ENCODE measurements at regions of chr1 and their contacts with region 1.

Region 1: GRCh38 chr1:181366910-181367309 is 116.4 kb upstream of the CACNA1E start:
- DNase-seq: peak in 1 of 2 donors; percentile 58
- H3K4me3 ChIP-seq: no peak overlapping the region
- CTCF ChIP-seq: no peak
- POLR2A ChIP-seq: no peak

Region 2: DNA sequence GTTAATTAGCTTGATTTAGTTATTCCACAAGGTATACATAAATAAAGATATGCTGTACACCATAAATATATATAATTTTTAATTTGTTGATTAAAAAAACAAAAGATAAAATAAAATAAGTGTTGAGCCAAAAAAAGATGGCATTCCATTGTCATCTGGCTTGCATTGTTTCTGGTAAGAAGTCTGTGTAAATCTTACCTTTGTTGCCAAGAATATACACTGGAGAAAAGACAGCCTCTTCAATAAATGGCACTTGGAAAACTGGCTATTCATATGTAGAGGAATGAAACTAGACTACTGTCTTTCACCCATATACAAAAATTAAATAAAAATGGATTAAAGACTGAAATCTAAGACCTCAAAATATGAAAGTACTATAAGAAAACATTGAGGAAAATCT is 81.9 kb before region 1 on chr1:
- intact Hi-C with region 1: no loop called
- DNase-seq: no peak
- H3K4me3 ChIP-seq: no peak overlapping the region
- CTCF ChIP-seq: no peak
- POLR2A ChIP-seq: no peak

Region 3: DNA sequence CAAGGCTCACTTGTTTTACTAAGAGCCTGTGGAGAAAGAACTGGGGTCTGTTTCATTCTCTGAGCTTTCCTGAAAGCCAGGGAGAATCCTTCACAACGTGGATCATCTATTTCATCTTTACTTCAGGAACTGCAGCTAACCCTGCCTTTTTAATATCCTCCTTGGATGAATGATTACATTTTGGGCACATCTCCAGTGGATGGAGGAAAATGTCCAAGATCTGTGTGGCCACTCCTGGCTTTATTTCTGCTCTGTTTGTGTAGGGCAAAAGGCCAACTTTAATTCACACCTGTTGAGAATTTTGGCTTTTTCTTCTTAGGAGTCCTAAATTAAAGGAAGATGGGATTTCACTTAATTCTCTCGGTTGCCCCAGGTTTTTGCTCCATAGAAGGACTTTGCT is 46.9 kb after region 1 on chr1:
- intact Hi-C with region 1: loop called (anchors 2 kb)
- DNase-seq: no peak
- H3K4me3 ChIP-seq: no peak overlapping the region
- CTCF ChIP-seq: no peak
- POLR2A ChIP-seq: no peak

Region 4: DNA sequence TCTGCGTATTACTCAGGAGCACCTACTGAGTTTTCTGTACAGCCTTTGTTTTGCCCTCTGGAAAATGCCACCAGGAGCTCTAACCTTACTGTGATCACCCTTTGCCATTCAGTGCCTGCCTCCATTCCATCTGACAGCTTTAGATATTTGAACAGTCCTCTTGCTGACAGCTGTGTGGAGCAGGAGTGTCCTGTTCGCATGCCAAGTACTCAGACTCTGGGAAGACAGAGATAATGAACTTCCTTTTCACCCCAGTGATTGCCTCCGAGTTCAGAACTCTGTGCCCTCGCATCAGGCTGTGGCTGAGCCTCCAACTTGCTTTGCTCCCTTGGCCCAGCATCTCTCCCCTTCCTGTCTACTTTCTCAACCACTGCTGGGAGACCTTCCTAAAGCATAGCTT is 190.4 kb after region 1 on chr1:
- intact Hi-C with region 1: no loop called
- DNase-seq: no peak
- H3K4me3 ChIP-seq: no peak overlapping the region
- CTCF ChIP-seq: no peak
- POLR2A ChIP-seq: no peak

Measured in lower leg skin (tissue), 4 donors.